ENCODE measurements at regions of chr16 and their contacts with region 1.

Region 1: GRCh38 chr16:67546761-67547422 is 15.4 kb upstream of the CTCF start:
- DNase-seq: peak; percentile 84
- H3K4me3 ChIP-seq: no peak overlapping the region
- H3K27ac ChIP-seq: peak overlapping the region; percentile 47
- H3K4me1 ChIP-seq: no peaks in the 10 kb centered on the region
- H3K27me3 ChIP-seq: no peaks in the 10 kb centered on the region
- CTCF ChIP-seq: peak; percentile 98

Region 2: DNA sequence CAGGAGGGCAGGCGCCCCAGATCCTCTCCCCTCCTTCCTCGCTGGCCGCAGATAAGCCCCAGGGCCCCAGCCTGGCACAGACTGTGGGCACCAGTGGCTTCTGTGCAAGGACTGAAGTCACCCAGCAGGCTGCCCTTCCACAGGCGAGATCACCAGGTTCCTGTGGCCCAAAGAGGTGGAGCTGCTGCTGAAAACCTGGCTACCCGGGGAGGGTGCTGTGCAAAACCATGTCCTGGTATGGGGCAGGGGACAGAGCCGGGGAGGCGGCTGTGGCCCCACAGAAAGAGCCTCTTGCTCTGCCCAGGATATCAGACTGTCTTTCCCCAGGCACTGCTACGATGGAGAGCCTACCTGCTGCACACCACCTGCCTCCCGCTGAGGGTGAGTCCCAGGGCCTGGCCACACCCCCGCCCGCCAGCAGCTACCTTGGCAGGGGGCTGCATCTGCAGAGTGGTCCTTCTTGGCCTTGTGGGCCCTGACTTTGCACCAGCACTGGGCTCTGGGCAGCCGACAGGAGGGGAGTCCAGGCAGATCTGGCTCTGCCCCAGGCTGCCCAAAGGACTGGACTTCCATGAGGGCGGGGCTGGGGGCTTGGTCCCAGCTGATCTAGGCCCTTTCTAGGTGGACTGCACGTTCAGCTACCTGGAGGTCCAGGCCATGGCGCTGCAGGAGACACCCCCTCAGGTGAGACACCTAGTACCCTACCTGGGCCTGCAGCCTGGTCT is 98.7 kb after region 1 on chr16:
- CTCF ChIA-PET with region 1: interaction called, 17 read pairs
- POLR2A ChIA-PET with region 1: no interaction called
- intact Hi-C with region 1: loop called (anchors 1 kb)
- DNase-seq: no peak
- H3K4me3 ChIP-seq: peak overlapping the region; percentile 45
- H3K27ac ChIP-seq: no peak overlapping the region
- H3K4me1 ChIP-seq: no peaks in the 10 kb centered on the region
- H3K27me3 ChIP-seq: peaks cover 40% of the 10 kb centered on the region
- CTCF ChIP-seq: no peak

Region 3: GRCh38 chr16:67667817-67668494 is 121.1 kb after region 1 on chr16:
- CTCF ChIA-PET with region 1: interaction called, 19 read pairs
- POLR2A ChIA-PET with region 1: no interaction called
- intact Hi-C with region 1: no loop called
- DNase-seq: peak; percentile 96
- H3K4me3 ChIP-seq: no peak overlapping the region
- H3K27ac ChIP-seq: no peak overlapping the region
- H3K4me1 ChIP-seq: peaks cover 12% of the 10 kb centered on the region
- H3K27me3 ChIP-seq: no peaks in the 10 kb centered on the region
- CTCF ChIP-seq: peak; percentile 85

Region 4: GRCh38 chr16:67910158-67910557 is 363.3 kb after region 1 on chr16:
- CTCF ChIA-PET with region 1: no interaction called
- POLR2A ChIA-PET with region 1: no interaction called
- intact Hi-C with region 1: no loop called
- DNase-seq: peak; percentile 35
- H3K4me3 ChIP-seq: no peak overlapping the region
- H3K27ac ChIP-seq: no peak overlapping the region
- H3K4me1 ChIP-seq: no peaks in the 10 kb centered on the region
- H3K27me3 ChIP-seq: no peaks in the 10 kb centered on the region
- CTCF ChIP-seq: no peak